ENCODE measurements at regions of chr5 and their contacts with region 1.

Region 1: DNA sequence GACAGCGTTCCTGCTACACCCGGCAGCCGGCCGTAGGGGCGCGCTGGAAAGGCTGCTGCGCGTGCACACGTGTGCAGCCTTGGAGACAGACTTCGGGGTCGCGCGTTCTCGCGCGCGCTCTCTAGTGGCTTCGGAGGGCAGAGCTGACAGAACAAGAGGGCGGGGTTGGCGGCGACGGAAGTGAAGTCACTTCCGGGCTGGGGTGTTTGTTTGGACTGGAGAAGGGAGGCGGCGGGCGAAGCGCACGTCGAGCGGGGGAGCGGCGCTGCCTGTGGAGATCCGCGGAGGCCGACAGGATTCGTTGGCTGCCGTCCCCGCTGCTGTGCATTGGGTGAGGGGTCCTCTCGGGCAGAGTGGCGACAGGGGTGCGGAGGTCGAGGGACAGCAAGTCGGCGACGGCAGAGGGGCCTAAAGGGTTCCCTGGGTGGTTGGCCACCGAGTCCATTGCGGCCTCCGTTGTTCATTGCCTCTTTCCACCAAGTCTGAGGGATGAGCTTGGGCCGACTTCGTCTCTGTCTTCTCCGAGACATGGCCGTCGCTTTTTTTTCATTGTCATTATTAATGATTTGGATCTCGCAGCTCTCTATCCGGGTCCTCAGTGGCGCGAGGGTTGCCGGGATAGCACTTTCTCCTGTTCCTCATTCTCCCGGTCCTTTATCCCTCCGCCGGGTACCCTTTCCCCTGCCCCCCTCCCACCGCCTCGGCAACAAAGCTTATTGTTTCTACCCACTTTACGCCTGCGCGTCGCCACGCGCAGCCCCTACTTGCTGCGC is at the start of gene PAIP2:
- DNase-seq: peak; percentile 94 to 100 (median 98)
- ATAC-seq: peak; percentile 85 to 93 (median 91)
- H3K4me3 ChIP-seq: peak within 1 kb of the TSS; percentile 99 to 100
- H3K4me3 Mint-ChIP-seq: peak within 1 kb of the TSS; percentile 98 to 100 (median 100)
- H3K27ac ChIP-seq: peak within 1 kb of the TSS; percentile 99
- H3K27ac Mint-ChIP-seq: peak within 1 kb of the TSS; percentile 99
- H3K4me1 ChIP-seq: peaks cover 23 to 38% of the 10 kb centered on the region in 2 experiments
- H3K4me1 Mint-ChIP-seq: peaks cover 54 to 61% (median 58%) of the 10 kb centered on the region in 3 donors
- H3K27me3 ChIP-seq: peaks cover 0 to 3% of the 10 kb centered on the region in 2 experiments
- H3K27me3 Mint-ChIP-seq: no peaks in the 10 kb centered on the region
- total RNA-seq, gene PAIP2: 96.5 to 119 (median 101) TPM

Region 2: GRCh38 chr5:139306197-139306596 is 35.6 kb before region 1 on chr5:
- CTCF ChIA-PET with region 1: no interaction called
- POLR2A ChIA-PET with region 1: interaction called in 1 of 2 experiments, 14 read pairs
- DNase-seq: no peak
- ATAC-seq: peak in 2 of 4 experiments; percentile 18 to 44
- H3K4me3 ChIP-seq: no peak overlapping the region
- H3K4me3 Mint-ChIP-seq: peak overlapping the region in 2 of 3 donors; percentile 22 to 60
- H3K27ac ChIP-seq: peak overlapping the region; percentile 7
- H3K27ac Mint-ChIP-seq: peak overlapping the region; percentile 16 to 50
- H3K4me1 ChIP-seq: peaks cover 34 to 48% of the 10 kb centered on the region in 2 experiments
- H3K4me1 Mint-ChIP-seq: peaks cover 92 to 95% (median 94%) of the 10 kb centered on the region in 3 donors
- H3K27me3 ChIP-seq: no peaks in the 10 kb centered on the region
- H3K27me3 Mint-ChIP-seq: no peaks in the 10 kb centered on the region

Region 3: DNA sequence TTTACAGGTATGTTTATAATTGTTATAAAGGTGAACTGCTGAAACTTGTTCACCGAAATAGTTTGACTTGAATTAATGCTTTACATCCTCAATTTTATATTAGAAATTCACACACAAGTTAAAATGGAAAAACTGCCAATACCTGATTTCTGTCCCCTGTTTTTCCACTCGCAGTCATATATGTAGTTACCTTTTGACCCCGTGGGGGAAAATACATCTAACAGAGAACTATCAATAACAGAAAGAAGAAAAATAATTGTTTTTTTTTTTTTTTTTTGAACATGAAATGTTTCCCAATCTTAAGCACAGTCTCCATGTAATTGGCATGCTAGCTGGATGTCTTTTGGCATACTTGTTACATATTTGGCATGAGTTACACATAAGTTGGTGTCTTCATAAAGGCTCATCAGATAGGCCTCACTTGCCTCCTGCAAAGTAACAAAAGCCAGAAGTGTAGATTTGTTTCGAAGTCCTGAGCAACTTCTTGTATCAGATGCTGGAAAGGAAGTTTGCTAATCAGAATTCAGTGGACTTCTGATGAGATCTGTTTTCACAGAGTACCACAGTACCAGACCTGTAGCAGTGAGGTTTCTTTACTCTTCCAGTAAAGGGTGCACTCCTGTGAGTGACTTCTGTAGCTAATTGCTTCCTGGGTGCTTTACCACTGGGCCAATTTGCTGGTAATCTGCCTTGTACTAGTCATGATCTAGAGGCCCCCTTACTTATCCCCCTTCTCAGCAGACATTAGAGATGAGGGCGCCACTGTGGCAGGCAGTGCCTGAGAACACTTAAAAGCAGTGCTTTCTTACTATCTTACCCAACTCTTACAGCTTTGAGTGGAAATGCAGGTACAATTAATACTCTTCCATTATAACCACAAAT is 270.1 kb after region 1 on chr5:
- CTCF ChIA-PET with region 1: no interaction called
- POLR2A ChIA-PET with region 1: interaction called in 1 of 2 experiments, 12 read pairs
- DNase-seq: no peak
- ATAC-seq: peak in 1 of 4 experiments; percentile 44
- H3K4me3 ChIP-seq: no peak overlapping the region
- H3K4me3 Mint-ChIP-seq: no peak overlapping the region
- H3K27ac ChIP-seq: no peak overlapping the region
- H3K27ac Mint-ChIP-seq: peak overlapping the region; percentile 50 to 77
- H3K4me1 ChIP-seq: peaks cover 0 to 8% of the 10 kb centered on the region in 2 experiments
- H3K4me1 Mint-ChIP-seq: peaks cover 23 to 35% (median 35%) of the 10 kb centered on the region in 3 donors
- H3K27me3 ChIP-seq: no peaks in the 10 kb centered on the region
- H3K27me3 Mint-ChIP-seq: no peaks in the 10 kb centered on the region